ENCODE measurements at regions of chr3 and their contacts with region 1.

Region 1: DNA sequence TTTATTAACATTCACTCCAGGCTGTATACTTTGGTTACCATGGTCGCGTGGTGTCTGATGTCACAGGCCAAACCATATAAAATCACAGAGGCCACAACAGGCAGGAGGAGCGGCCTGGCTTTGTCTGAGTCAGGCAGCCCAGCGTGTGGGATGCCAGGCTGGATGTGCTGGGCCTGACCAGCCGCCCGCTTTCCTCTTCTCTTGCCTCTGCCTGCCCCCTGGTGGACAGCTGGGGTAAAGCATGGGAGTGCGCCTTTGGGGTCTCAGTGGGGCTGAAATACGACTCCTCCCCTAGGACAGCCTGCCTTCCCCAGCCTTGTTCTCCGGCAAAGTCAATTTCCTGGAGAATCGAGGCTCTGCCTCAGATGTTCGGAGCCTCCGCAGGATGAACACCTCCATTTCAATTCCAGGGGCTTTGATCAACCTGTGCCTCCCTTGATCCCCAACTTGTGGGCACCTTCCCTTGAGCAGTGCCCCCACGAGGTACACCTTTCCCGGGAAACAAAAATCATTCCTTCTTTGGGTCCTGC is 78.2 kb downstream of the CCNL1 start:
- DNase-seq: peak; percentile 90
- H3K4me3 ChIP-seq: no peak overlapping the region
- H3K27ac ChIP-seq: peak overlapping the region; percentile 29 to 47 (median 41)
- H3K4me1 ChIP-seq: peaks cover 1 to 13% (median 8%) of the 10 kb centered on the region in 4 donors
- H3K27me3 ChIP-seq: no peaks in the 10 kb centered on the region
- CTCF ChIP-seq: peak; percentile 96 to 99 (median 99)
- EP300 ChIP-seq: no peak
- POLR2A ChIP-seq: no peak

Region 2: DNA sequence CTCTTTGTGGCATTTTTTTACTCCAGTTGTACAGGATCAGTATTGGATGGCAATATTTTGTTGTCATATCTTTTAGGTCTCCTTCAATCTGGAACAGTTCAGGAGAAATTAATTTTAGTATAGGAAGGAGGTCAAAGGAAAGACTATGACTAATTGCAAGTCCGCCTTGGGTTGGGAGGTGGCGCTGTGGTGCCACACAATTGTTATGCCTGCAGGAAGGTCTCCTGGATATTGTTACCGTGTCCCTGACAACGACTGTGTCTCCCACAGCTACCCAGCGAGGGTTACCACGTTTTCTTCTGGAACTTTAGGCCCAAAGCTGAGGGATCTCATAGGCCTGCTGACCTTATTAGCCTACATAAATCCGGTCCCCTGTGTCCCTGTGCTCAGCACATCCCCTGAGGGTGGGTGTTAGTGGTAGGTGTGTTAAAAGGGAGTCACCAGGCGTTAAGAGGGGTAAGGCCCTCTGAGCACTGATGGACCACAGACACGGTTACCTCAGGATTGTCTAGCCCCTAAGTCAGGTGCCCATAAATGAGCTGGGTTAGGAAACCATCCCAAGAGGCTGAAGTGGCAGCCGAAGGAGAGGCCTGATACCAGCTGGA is 929.8 kb before region 1 on chr3:
- in situ Hi-C with region 1: loop called in 2 of 4 experiments (anchors 25 kb)
- intact Hi-C with region 1: no loop called
- DNase-seq: peak; percentile 73
- H3K4me3 ChIP-seq: no peak overlapping the region
- H3K27ac ChIP-seq: peak overlapping the region in 1 of 4 donors; percentile 14
- H3K4me1 ChIP-seq: peaks cover 0 to 11% (median 3%) of the 10 kb centered on the region in 4 donors
- H3K27me3 ChIP-seq: no peaks in the 10 kb centered on the region
- CTCF ChIP-seq: peak; percentile 67 to 77 (median 73)
- EP300 ChIP-seq: no peak
- POLR2A ChIP-seq: no peak

Region 3: GRCh38 chr3:156547637-156548036 is 534.1 kb before region 1 on chr3:
- in situ Hi-C with region 1: loop called (anchors 10 to 25 kb)
- intact Hi-C with region 1: no loop called
- DNase-seq: no peak
- H3K4me3 ChIP-seq: no peak overlapping the region
- H3K27ac ChIP-seq: peak overlapping the region; percentile 39 to 62 (median 54)
- H3K4me1 ChIP-seq: peaks cover 10 to 68% (median 19%) of the 10 kb centered on the region in 4 donors
- H3K27me3 ChIP-seq: no peaks in the 10 kb centered on the region
- CTCF ChIP-seq: no peak
- EP300 ChIP-seq: no peak
- POLR2A ChIP-seq: no peak

Region 4: DNA sequence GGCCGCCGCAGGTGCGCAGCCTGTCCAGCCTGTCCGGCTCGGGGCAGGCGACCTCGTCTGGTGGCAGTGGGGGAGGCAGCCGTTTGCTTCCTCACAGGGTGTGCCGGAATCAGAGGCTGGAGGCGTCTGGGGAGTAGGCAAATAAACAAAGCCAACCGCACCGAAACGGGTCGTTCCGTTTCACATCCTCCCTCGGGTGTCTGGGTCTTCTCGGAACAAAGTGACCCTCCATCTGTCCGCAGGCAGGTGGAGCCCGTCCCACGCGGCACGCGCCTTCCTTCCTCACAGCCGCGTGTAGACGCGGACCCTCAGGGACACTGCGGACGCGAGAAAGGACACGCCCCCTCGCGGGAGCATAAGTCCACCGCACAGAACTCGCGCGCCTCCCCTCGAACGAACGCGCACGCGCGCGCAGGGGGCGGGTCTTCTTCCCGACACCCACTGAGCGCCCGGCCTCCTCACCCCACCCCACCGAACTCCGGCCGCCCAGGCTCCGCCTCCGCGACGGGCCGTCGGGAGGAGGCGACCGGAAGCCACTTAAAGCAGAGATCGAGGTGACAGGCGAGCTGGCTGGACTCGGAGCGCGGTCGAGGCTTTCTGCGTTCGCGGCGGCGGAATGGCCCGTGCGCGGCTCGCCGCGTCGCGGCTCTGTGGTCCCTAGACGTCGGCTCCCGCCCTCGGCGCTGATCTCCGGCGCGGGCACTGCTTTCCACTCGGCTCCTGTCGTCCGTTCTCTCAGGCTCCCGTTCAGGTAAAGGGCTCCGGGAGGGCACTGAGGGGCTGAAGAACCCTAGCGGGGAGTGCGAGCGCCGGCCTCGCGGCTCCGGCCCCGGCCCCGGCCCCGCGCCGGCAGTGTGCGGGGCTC is 407.5 kb before region 1 on chr3 and contains the start of gene TIPARP:
- in situ Hi-C with region 1: loop called in 3 of 4 experiments (anchors 10 kb)
- intact Hi-C with region 1: loop called (anchors 5 kb)
- DNase-seq: peak; percentile 100
- H3K4me3 ChIP-seq: peak within 1 kb of the TSS; percentile 69 to 98 (median 86)
- H3K27ac ChIP-seq: peak within 1 kb of the TSS; percentile 97 to 100 (median 99)
- H3K4me1 ChIP-seq: peaks cover 12 to 53% (median 23%) of the 10 kb centered on the region in 4 donors
- H3K27me3 ChIP-seq: no peaks in the 10 kb centered on the region
- CTCF ChIP-seq: peak; percentile 54 to 91 (median 71)
- EP300 ChIP-seq: peak; percentile 67
- POLR2A ChIP-seq: peak; percentile 100
- total RNA-seq, gene TIPARP: 11.9 to 47.1 (median 34.3) TPM

Region 5: GRCh38 chr3:156816800-156817645 is 264.7 kb before region 1 on chr3:
- in situ Hi-C with region 1: loop called in 3 of 4 experiments (anchors 10 kb)
- intact Hi-C with region 1: loop called (anchors 10 kb)
- DNase-seq: peak; percentile 91
- H3K4me3 ChIP-seq: peak overlapping the region; percentile 35 to 65 (median 56)
- H3K27ac ChIP-seq: peak overlapping the region; percentile 84 to 91 (median 88)
- H3K4me1 ChIP-seq: peaks cover 9 to 38% (median 22%) of the 10 kb centered on the region in 4 donors
- H3K27me3 ChIP-seq: no peaks in the 10 kb centered on the region
- CTCF ChIP-seq: peak in 2 of 5 experiments; percentile 10 to 15
- EP300 ChIP-seq: peak; percentile 89
- POLR2A ChIP-seq: peak; percentile 79

Region 6: GRCh38 chr3:157130467-157131251 is 48.9 kb after region 1 on chr3:
- in situ Hi-C with region 1: loop called in 2 of 4 experiments (anchors 10 kb)
- intact Hi-C with region 1: no loop called
- DNase-seq: peak; percentile 92
- H3K4me3 ChIP-seq: no peak overlapping the region
- H3K27ac ChIP-seq: peak overlapping the region; percentile 91 to 94 (median 92)
- H3K4me1 ChIP-seq: peaks cover 30 to 79% (median 56%) of the 10 kb centered on the region in 4 donors
- H3K27me3 ChIP-seq: no peaks in the 10 kb centered on the region
- CTCF ChIP-seq: peak; percentile 57 to 87 (median 63)
- EP300 ChIP-seq: peak; percentile 55
- POLR2A ChIP-seq: peak; percentile 8